K562 (cell line): ENCODE measurements at regions of chr1 and their contacts with region 1.

Region 1: GRCh38 chr1:28510665-28511440 is 5.0 kb downstream of the RCC1 start:
- DNase-seq: peak in 2 of 4 experiments; percentile 17 to 75
- ATAC-seq: peak; percentile 3
- H3K4me3 ChIP-seq: peak overlapping the region; percentile 87
- H3K27ac ChIP-seq: peak overlapping the region; percentile 94
- H3K4me1 ChIP-seq: peaks cover 2 to 19% of the 10 kb centered on the region in 2 experiments; a peak in 2 of 5 replicates
- H3K27me3 ChIP-seq: no peaks in the 10 kb centered on the region
- CTCF ChIP-seq: no peak
- EP300 ChIP-seq: no peak
- POLR2A ChIP-seq: peak; percentile 94
- RAD21 ChIP-seq: no peak

Region 2: DNA sequence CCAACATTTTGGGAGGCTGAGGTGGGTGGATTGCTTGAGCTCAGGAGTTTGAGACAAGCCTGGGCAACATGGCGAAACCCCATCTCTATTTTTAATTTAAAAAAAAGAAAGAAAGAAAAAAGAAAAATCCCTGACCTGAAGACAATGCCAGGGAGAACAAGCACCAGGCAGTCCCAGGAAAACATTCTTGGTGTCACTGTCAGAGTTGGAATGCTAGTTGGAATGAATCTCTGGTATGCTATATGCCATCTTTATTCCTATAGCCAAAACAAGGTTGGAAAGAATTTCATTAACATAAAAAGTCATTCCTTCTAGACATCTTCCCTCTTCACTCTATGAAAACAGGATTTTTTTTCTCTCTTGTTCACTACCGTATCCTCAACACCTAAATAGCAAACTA is 280.9 kb before region 1 on chr1:
- CTCF ChIA-PET with region 1: no interaction called
- POLR2A ChIA-PET with region 1: no interaction called
- in situ Hi-C with region 1: no loop called
- intact Hi-C with region 1: no loop called
- DNase-seq: no peak
- ATAC-seq: no peak
- H3K4me3 ChIP-seq: no peak overlapping the region
- H3K27ac ChIP-seq: no peak overlapping the region
- H3K4me1 ChIP-seq: peaks cover 5 to 28% of the 10 kb centered on the region in 2 experiments; a peak in 4 of 5 replicates
- H3K27me3 ChIP-seq: no peaks in the 10 kb centered on the region
- CTCF ChIP-seq: no peak
- EP300 ChIP-seq: no peak
- POLR2A ChIP-seq: no peak
- RAD21 ChIP-seq: no peak

Region 3: DNA sequence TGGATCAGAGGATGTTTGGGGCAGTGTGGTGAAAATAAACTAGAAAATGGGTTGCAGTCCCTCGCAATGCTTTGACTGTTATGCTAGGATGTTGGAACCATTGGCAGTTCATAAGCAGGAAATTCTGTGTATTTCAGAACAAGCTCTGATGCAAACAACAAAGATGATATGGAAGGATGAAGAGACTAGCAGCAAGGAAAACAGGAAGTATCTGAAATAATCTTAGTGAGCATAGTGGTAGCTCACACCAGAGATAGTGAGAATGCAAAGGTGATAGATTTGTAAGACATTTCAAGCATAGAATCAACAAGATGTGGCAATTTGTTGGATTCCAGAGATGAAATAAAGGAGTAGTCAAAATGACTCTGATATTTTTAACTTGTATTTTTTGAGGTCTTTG is 16.1 kb before region 1 on chr1:
- CTCF ChIA-PET with region 1: no interaction called
- POLR2A ChIA-PET with region 1: interaction called, 54 read pairs
- in situ Hi-C with region 1: no loop called
- intact Hi-C with region 1: no loop called
- DNase-seq: no peak
- ATAC-seq: peak; percentile 51
- H3K4me3 ChIP-seq: no peak overlapping the region
- H3K27ac ChIP-seq: no peak overlapping the region
- H3K4me1 ChIP-seq: peaks cover 6% of the 10 kb centered on the region in 2 experiments; a peak in 2 of 5 replicates
- H3K27me3 ChIP-seq: no peaks in the 10 kb centered on the region
- CTCF ChIP-seq: no peak
- EP300 ChIP-seq: no peak
- POLR2A ChIP-seq: no peak
- RAD21 ChIP-seq: no peak

Region 4: DNA sequence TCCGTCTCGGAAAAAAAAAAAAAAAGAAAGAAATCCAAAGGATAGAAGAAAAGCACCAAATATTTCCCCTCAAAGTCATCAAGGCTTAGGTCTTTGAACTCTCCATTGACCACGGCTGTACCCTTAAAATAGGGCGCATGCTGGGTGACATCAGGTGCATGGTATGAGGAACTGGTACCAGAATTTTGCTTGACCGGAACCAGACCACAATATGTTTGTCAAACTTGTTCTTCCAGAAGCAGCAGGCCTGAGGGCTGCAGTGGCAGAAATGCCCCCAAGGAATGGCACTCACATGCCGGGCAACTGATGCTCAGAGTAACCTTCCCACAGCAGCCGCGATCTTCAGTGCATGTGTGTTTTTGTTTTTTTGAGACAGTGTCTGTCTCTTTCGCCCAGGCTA is 16.0 kb after region 1 on chr1:
- CTCF ChIA-PET with region 1: no interaction called
- POLR2A ChIA-PET with region 1: interaction called, 123 read pairs
- in situ Hi-C with region 1: no loop called
- intact Hi-C with region 1: no loop called
- DNase-seq: no peak
- ATAC-seq: no peak
- H3K4me3 ChIP-seq: no peak overlapping the region
- H3K27ac ChIP-seq: no peak overlapping the region
- H3K4me1 ChIP-seq: peaks cover 19 to 24% of the 10 kb centered on the region in 2 experiments
- H3K27me3 ChIP-seq: no peaks in the 10 kb centered on the region
- CTCF ChIP-seq: no peak
- EP300 ChIP-seq: no peak
- POLR2A ChIP-seq: no peak
- RAD21 ChIP-seq: no peak

Region 5: GRCh38 chr1:28565040-28565439 is 54.2 kb after region 1 on chr1:
- CTCF ChIA-PET with region 1: no interaction called
- POLR2A ChIA-PET with region 1: no interaction called
- in situ Hi-C with region 1: no loop called
- intact Hi-C with region 1: no loop called
- DNase-seq: no peak
- ATAC-seq: no peak
- H3K4me3 ChIP-seq: no peak overlapping the region
- H3K27ac ChIP-seq: no peak overlapping the region
- H3K4me1 ChIP-seq: no peaks in the 10 kb centered on the region
- H3K27me3 ChIP-seq: no peaks in the 10 kb centered on the region
- CTCF ChIP-seq: no peak
- EP300 ChIP-seq: no peak
- POLR2A ChIP-seq: no peak
- RAD21 ChIP-seq: no peak

Region 6: GRCh38 chr1:28865997-28866650 is 355.3 kb after region 1 on chr1:
- CTCF ChIA-PET with region 1: no interaction called
- POLR2A ChIA-PET with region 1: no interaction called
- in situ Hi-C with region 1: loop called (anchors 5 kb)
- intact Hi-C with region 1: no loop called
- DNase-seq: no peak
- ATAC-seq: no peak; the same call in 2 of the 3 replicates
- H3K4me3 ChIP-seq: no peak overlapping the region
- H3K27ac ChIP-seq: no peak overlapping the region
- H3K4me1 ChIP-seq: peaks cover 0 to 11% of the 10 kb centered on the region in 2 experiments; a peak in 2 of 5 replicates
- H3K27me3 ChIP-seq: peaks cover 37 to 70% of the 10 kb centered on the region in 2 experiments
- CTCF ChIP-seq: no peak
- EP300 ChIP-seq: no peak
- POLR2A ChIP-seq: no peak
- RAD21 ChIP-seq: no peak